ENCODE measurements at regions of chr4 and their contacts with region 1.

Region 1: GRCh38 chr4:82900331-82901128 is at the start of gene THAP9:
- DNase-seq: peak; percentile 94 to 100 (median 96)
- ATAC-seq: peak; percentile 86
- H3K4me3 ChIP-seq: peak within 1 kb of the TSS; percentile 72
- H3K4me3 Mint-ChIP-seq: no peak within 1 kb of the TSS
- H3K27ac ChIP-seq: peak within 1 kb of the TSS; percentile 94 to 99
- H3K27ac Mint-ChIP-seq: no peak within 1 kb of the TSS
- H3K4me1 ChIP-seq: peaks cover 11% of the 10 kb centered on the region
- H3K4me1 Mint-ChIP-seq: peaks cover 13% of the 10 kb centered on the region
- H3K27me3 ChIP-seq: no peaks in the 10 kb centered on the region
- H3K27me3 Mint-ChIP-seq: no peaks in the 10 kb centered on the region
- CTCF ChIP-seq: no peak
- total RNA-seq, gene THAP9: 3.8 to 4.3 TPM

Region 2: DNA sequence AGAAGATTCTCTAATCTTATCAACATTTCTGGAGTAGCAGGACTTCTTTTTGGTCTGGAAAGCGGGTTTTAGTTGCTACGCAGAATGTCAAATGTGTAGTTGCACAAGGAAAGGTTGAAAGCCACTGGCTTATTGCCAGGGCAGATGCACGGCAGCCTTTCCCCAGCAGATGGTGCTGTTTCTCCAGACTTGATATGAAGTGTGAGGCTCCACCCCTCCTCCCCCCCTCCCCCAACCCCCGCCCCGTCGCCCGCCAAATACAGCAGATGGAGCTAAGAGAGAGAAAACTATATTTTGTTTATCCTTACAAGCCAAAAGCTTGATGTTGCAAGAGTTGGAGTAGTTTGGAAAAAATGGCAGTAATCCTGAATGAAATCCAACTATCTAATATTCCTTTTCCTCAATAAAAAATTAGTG is 438.1 kb before region 1 on chr4:
- CTCF ChIA-PET with region 1: no interaction called
- POLR2A ChIA-PET with region 1: no interaction called
- intact Hi-C with region 1: loop called in 1 of 2 experiments (anchors 2 kb)
- DNase-seq: peak; percentile 68 to 90 (median 80)
- ATAC-seq: peak; percentile 99
- H3K4me3 ChIP-seq: no peak overlapping the region
- H3K4me3 Mint-ChIP-seq: no peak overlapping the region
- H3K27ac ChIP-seq: no peak overlapping the region
- H3K27ac Mint-ChIP-seq: no peak overlapping the region
- H3K4me1 ChIP-seq: no peaks in the 10 kb centered on the region
- H3K4me1 Mint-ChIP-seq: peaks cover 6% of the 10 kb centered on the region
- H3K27me3 ChIP-seq: no peaks in the 10 kb centered on the region
- H3K27me3 Mint-ChIP-seq: no peaks in the 10 kb centered on the region
- CTCF ChIP-seq: peak; percentile 71

Region 3: DNA sequence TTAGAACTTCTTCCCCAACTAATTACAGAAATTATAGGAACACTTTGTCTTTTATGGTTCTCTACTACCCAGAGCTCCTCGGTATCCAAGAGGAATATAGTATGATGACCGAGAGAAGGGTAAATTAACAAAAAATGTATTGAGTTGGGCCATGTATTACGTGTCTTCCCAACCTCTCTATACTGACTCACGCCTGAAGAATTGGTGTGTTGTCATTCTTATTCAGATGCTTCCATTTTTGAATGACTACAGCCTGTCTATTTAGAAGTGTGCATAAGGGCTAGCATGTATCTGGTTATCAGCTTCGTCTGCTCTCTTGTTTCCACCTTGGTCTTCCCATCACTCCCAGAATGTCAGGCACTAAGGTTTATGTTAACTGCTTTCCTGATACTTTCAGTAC is 77.5 kb before region 1 on chr4:
- CTCF ChIA-PET with region 1: no interaction called
- POLR2A ChIA-PET with region 1: no interaction called
- intact Hi-C with region 1: no loop called
- DNase-seq: no peak
- ATAC-seq: no peak
- H3K4me3 ChIP-seq: no peak overlapping the region
- H3K4me3 Mint-ChIP-seq: no peak overlapping the region
- H3K27ac ChIP-seq: no peak overlapping the region
- H3K27ac Mint-ChIP-seq: no peak overlapping the region
- H3K4me1 ChIP-seq: no peaks in the 10 kb centered on the region
- H3K4me1 Mint-ChIP-seq: no peaks in the 10 kb centered on the region
- H3K27me3 ChIP-seq: no peaks in the 10 kb centered on the region
- H3K27me3 Mint-ChIP-seq: no peaks in the 10 kb centered on the region
- CTCF ChIP-seq: no peak

Region 4: DNA sequence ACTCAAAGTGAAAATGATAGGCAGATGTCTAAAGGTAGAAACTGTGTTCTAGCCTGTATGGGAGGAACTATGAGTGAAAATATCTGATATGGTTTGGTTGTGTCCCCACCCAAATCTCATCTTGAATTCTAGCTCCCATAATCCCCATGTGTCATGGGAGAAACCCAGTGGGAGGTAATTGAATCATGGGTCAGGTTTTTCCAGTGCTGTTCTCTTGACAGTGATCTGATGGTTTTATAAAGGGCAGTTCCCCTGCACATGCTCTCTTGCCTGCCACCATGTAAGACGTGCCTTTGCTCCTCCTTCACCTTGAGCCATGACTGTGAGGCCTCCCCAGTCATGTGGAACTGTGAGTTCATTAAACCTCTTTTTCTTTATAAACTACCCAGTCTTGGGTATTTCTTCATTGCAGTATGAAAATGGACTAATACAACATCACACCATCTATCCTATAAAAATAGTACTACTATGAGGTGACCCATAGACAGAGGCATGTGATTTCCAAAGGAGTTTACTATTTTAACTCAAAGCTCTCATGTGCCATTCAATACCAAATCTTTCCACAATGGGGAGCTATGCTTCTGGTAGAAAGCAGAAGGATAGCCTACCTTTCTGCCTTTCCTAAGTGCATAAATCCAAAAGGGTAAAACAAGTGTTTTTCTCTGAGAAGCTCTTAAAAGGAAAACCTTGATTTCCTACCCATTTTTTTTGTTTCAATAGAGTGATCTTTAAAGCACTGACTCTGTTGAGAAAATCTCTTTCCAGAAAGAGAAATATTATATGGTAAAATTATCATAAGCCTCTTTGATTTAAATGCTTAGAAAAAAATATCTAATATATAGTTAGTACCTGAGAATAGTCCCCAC is 48.4 kb before region 1 on chr4:
- CTCF ChIA-PET with region 1: interaction called, 3 read pairs
- POLR2A ChIA-PET with region 1: interaction called, 7 read pairs
- intact Hi-C with region 1: loop called in 1 of 2 experiments (anchors 5 kb)
- DNase-seq: peak in 3 of 14 experiments; percentile 58 to 62 (median 58)
- ATAC-seq: peak; percentile 49
- H3K4me3 ChIP-seq: no peak overlapping the region
- H3K4me3 Mint-ChIP-seq: no peak overlapping the region
- H3K27ac ChIP-seq: no peak overlapping the region
- H3K27ac Mint-ChIP-seq: peak overlapping the region; percentile 56
- H3K4me1 ChIP-seq: no peaks in the 10 kb centered on the region
- H3K4me1 Mint-ChIP-seq: peaks cover 6% of the 10 kb centered on the region
- H3K27me3 ChIP-seq: no peaks in the 10 kb centered on the region
- H3K27me3 Mint-ChIP-seq: no peaks in the 10 kb centered on the region
- CTCF ChIP-seq: peak; percentile 34

Region 5: GRCh38 chr4:82864336-82864979 is 36.1 kb before region 1 on chr4:
- CTCF ChIA-PET with region 1: no interaction called
- POLR2A ChIA-PET with region 1: interaction called, 8 read pairs
- intact Hi-C with region 1: loop called in 1 of 2 experiments (anchors 5 kb)
- DNase-seq: peak in 1 of 14 experiments; percentile 4
- ATAC-seq: peak; percentile 37
- H3K4me3 ChIP-seq: no peak overlapping the region
- H3K4me3 Mint-ChIP-seq: no peak overlapping the region
- H3K27ac ChIP-seq: peak overlapping the region in 1 of 2 donors; percentile 13
- H3K27ac Mint-ChIP-seq: peak overlapping the region; percentile 67
- H3K4me1 ChIP-seq: peaks cover 7% of the 10 kb centered on the region
- H3K4me1 Mint-ChIP-seq: peaks cover 25% of the 10 kb centered on the region
- H3K27me3 ChIP-seq: no peaks in the 10 kb centered on the region
- H3K27me3 Mint-ChIP-seq: no peaks in the 10 kb centered on the region
- CTCF ChIP-seq: no peak

Region 6: GRCh38 chr4:83012687-83013419 is 112.3 kb after region 1 on chr4:
- CTCF ChIA-PET with region 1: interaction called, 3 read pairs
- POLR2A ChIA-PET with region 1: interaction called, 30 read pairs
- intact Hi-C with region 1: loop called (anchors 2 kb)
- DNase-seq: peak; percentile 94 to 99 (median 96)
- ATAC-seq: peak; percentile 85
- H3K4me3 ChIP-seq: peak overlapping the region; percentile 71
- H3K4me3 Mint-ChIP-seq: peak overlapping the region; percentile 97
- H3K27ac ChIP-seq: peak overlapping the region; percentile 33 to 49
- H3K27ac Mint-ChIP-seq: peak overlapping the region; percentile 91
- H3K4me1 ChIP-seq: peaks cover 26% of the 10 kb centered on the region
- H3K4me1 Mint-ChIP-seq: peaks cover 58% of the 10 kb centered on the region
- H3K27me3 ChIP-seq: no peaks in the 10 kb centered on the region
- H3K27me3 Mint-ChIP-seq: no peaks in the 10 kb centered on the region
- CTCF ChIP-seq: peak; percentile 56

Region 7: GRCh38 chr4:83034630-83035494 is 134.3 kb after region 1 on chr4 and contains the start of gene COPS4:
- CTCF ChIA-PET with region 1: interaction called, 8 read pairs
- POLR2A ChIA-PET with region 1: interaction called, 55 read pairs
- intact Hi-C with region 1: loop called in 1 of 2 experiments (anchors 2 kb)
- DNase-seq: peak; percentile 86 to 100 (median 92)
- ATAC-seq: peak; percentile 95
- H3K4me3 ChIP-seq: peak within 1 kb of the TSS; percentile 83
- H3K4me3 Mint-ChIP-seq: peak within 1 kb of the TSS; percentile 99
- H3K27ac ChIP-seq: peak within 1 kb of the TSS; percentile 84
- H3K27ac Mint-ChIP-seq: peak within 1 kb of the TSS; percentile 90
- H3K4me1 ChIP-seq: peaks cover 28% of the 10 kb centered on the region
- H3K4me1 Mint-ChIP-seq: peaks cover 41% of the 10 kb centered on the region
- H3K27me3 ChIP-seq: no peaks in the 10 kb centered on the region
- H3K27me3 Mint-ChIP-seq: no peaks in the 10 kb centered on the region
- CTCF ChIP-seq: no peak
- total RNA-seq, gene COPS4: 26.0 to 27.6 TPM

Region 8: DNA sequence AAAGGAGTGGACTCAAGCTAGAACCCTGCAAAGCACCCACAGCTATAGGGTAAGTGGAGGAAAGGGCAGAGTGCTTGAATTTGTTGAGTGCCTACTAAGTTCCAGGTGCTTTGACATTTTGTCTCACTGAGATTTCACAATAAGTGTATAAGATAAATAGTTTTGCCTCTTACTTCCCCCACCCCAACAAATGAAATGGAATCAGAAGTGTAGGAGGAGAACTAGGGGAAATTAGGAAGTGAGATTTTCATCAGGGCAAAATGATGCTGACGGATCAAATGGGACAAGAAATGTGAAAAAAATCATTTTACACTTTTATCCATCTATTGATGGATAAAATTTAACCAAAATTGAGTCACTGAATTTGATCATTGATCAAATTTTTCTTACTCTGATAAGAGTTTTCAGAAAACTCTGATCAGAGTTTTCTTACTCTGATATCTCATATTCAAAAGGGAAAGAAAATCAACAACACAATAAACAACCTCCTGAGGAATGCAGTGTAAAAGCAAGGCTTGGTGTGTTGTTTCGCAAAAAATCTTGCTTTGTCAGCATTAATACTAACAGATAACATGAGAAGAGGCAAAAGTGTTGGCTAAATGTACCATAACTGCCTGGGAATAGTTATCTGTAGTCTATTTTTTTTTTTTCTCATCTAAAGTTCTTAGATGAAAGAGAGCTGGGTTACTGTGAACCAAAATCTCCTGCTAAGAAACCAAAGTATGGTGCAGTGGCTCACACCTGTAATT is 189.1 kb after region 1 on chr4:
- CTCF ChIA-PET with region 1: no interaction called
- POLR2A ChIA-PET with region 1: no interaction called
- intact Hi-C with region 1: no loop called
- DNase-seq: no peak
- ATAC-seq: no peak
- H3K4me3 ChIP-seq: no peak overlapping the region
- H3K4me3 Mint-ChIP-seq: no peak overlapping the region
- H3K27ac ChIP-seq: no peak overlapping the region
- H3K27ac Mint-ChIP-seq: peak overlapping the region; percentile 78
- H3K4me1 ChIP-seq: peaks cover 8% of the 10 kb centered on the region
- H3K4me1 Mint-ChIP-seq: peaks cover 60% of the 10 kb centered on the region
- H3K27me3 ChIP-seq: no peaks in the 10 kb centered on the region
- H3K27me3 Mint-ChIP-seq: no peaks in the 10 kb centered on the region
- CTCF ChIP-seq: no peak

Measured in CD4-positive, alpha-beta T cell (primary cell).